Head of caudate nucleus (tissue), 42 donors: ENCODE measurements at regions of chr10 and their contacts with region 1.

Region 1: GRCh38 chr10:103415581-103415980 is 19.2 kb downstream of the PDCD11 start:
- DNase-seq: no peak

Region 2: GRCh38 chr10:102268375-102268888 is 1147.1 kb before region 1 on chr10:
- intact Hi-C with region 1: no loop called
- DNase-seq: no peak

Region 3: DNA sequence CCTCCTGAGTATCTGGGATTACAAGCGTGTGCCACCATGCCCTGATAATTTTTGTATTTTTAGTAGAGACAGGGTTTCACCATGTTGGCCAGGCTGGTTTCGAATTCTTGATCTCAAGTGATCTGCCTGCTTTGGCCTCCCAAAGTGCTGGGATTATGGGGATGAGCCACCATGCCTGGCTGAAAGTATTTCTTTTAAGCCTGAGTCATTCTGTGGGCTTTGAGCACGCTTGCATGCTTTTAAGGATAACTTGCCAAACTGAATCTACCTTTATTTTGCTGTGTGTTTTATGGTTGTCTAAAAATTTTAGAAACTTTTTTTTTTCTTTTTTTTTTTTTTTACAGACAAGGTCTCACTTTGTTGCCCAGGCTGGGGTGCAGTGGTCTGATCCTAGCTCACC is 464.3 kb before region 1 on chr10:
- intact Hi-C with region 1: no loop called
- DNase-seq: no peak

Region 4: DNA sequence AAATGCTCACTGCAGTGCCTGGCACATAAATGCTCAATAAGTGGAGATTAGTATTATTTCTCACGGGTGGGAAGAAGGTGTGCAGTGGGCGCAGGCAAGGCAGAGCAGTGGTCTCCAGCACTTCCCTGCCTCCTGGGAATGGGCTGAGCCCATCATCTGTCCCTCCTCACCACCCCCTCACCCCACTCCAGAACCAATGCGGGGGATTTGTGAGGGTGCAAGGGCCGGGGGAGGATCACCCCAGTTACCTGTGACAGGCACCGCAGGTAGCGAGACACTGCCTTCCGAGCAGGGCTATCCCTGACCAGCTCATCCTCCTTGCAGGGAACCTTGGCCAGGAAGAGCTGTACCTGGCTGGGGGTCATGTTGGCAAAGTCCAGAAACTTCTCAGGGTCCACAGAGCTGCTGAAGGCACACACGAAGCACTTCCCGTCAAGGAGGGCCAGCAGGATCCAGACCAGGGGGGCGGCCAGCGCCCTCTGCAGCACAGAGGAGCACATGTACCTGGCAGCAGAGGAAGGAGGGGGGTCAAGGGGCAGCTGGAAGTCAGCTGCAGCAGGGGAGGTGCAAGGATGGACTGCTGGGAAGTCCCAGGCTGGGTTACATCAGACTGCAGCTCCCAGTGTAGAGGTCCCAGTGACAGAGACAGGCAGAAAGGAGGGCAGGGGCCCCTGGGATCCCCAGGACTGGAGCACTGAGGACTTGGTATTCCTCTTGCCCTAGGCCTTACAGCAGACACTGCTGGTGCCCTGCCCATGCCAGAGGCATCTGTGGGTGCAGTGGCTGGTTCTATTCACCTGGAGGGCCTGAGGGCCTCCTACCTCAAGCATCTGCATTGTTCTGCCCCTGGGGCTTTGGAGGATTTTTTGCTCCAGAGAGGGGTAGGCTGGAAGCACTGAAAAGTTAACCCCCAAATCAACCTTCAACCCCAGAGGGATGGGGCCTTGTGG is 60.7 kb after region 1 on chr10:
- intact Hi-C with region 1: no loop called
- DNase-seq: no peak

Region 5: GRCh38 chr10:103486336-103487160 is 71.0 kb after region 1 on chr10:
- intact Hi-C with region 1: loop called (anchors 2 kb)
- DNase-seq: no peak